ENCODE measurements at regions of chr3 and their contacts with region 1.

Region 1: GRCh38 chr3:73100741-73101559 is 39.5 kb downstream of the EBLN2 start:
- DNase-seq: peak; percentile 84

Region 2: DNA sequence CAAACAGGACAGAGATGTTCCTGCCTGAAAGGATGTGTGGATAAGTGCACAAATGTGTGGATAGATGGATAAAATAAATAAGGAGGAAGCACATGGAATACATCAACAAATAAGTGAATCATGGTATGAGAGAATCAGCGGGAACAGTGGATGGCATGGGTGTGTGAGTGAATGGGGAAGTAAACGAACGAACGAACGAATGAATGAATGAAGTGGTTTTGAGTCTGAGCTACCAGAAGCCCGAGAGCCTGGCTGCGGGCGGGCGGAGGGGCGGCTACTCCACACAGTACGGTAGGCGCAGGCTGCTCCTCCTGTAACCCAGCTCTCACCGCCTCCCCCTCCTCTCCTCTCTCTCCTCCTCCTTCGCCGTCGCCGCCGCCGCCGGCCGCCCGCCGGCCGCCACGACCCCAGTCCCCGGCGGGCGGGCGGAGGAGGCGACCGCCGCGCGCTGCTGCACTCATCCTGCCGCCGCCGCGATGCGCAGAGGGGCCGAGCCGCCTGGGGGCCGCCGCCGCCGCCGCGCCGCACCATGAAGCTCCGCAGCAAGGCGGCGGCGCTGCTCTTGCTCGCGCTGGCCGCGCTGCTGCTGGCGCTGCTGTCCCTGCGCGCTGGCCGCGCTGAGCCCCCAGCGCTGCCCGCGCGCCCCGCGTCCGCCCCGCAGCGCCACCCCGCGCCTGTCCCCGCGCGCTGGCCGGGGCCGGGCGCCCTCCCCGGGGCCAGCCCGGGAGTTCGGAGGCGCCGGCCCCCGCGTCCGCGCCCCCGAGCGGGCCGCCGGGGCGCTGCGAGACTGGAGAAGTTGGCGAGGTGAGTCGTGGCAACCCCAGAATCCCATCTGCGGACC is 213.0 kb before region 1 on chr3 and contains the start of gene GXYLT2:
- in situ Hi-C with region 1: no loop called
- DNase-seq: peak; percentile 83

Region 3: GRCh38 chr3:73432023-73432705 is 331.2 kb after region 1 on chr3:
- in situ Hi-C with region 1: loop called (anchors 25 kb)
- DNase-seq: peak; percentile 49